Activated T-helper 1 cell treated with anti-CD3 and anti-CD28 coated beads, Interleukin-12 subunit alpha, Interleukin-12 subunit beta, Interleukin-2, Interleukin-4 antibody, amounts not matched to agents 30 ng/mL and 10 ng/mL and 1 ng/mL, durations not matched to agents 14 hours and 24 hours and 36 hours (primary cell): ENCODE measurements at regions of chr15 and their contacts with region 1.

Region 1: DNA sequence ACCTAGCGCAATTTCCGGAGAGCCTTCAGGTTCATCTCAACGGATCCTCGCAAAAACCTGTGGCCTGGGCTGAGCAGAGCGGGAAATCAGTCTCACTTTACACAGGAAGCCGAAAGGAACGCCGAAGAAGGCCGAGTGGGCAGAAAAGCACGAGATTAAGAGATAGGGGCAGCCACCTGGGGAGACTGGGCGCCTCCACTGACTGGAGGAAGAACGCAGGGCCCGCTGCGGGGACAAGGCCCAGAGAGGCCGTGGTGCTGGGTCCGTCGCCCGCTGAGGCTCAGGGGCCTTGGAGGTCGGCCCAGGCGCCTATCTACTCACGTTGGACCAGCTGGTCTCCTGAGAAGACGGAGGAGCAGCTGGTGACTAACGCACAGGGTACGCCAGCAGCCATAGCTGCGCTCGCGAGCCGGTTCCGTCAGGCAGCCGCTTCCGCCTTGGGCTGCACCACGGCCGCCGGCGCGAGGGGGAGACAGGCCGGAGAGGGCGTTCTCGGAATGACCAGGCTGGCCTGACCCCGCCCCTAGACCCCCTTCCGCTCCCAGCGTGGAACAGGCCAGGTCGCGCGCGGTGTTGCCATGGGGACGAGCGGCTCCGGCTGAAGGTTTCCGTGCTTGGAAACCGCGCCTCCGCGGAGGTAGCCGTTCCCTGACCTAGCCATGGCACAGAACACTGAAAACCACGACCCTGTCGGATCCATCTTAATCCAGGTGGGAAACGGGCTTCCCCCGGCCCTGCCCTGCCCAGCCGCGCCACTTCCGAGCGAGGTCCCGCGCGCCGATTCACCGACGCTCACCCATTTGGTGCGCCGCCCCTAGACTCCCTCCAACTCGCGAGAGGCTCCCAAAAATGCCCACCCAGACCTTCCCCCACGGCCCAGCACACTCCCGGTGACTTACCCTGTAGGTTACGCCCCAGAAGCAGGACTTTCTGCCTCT is at the starts of genes AAGAB and IQCH:
- DNase-seq: peak; percentile 98
- H3K4me3 Mint-ChIP-seq: peak within 1 kb of the TSS; percentile 100
- H3K27ac Mint-ChIP-seq: peak within 1 kb of the TSS; percentile 98
- H3K4me1 Mint-ChIP-seq: peaks cover 36% of the 10 kb centered on the region
- H3K27me3 Mint-ChIP-seq: peaks cover 18% of the 10 kb centered on the region
- total RNA-seq, gene AAGAB: 41.7 and 44.0 TPM in 2 replicates
- total RNA-seq, gene IQCH: 0.88 and 1.2 TPM in 2 replicates

Region 2: GRCh38 chr15:67065444-67066093 is 188.9 kb before region 1 on chr15 and contains the start of gene SMAD3:
- intact Hi-C with region 1: loop called (anchors 1 kb)
- DNase-seq: peak; percentile 81
- H3K4me3 Mint-ChIP-seq: peak within 1 kb of the TSS; percentile 100
- H3K27ac Mint-ChIP-seq: peak within 1 kb of the TSS; percentile 95
- H3K4me1 Mint-ChIP-seq: peaks cover 65% of the 10 kb centered on the region
- H3K27me3 Mint-ChIP-seq: peaks cover 3% of the 10 kb centered on the region
- total RNA-seq, gene SMAD3: 80.2 and 80.4 TPM in 2 replicates

Region 3: GRCh38 chr15:67216896-67217295 is 37.6 kb before region 1 on chr15:
- intact Hi-C with region 1: no loop called
- DNase-seq: no peak
- H3K4me3 Mint-ChIP-seq: no peak overlapping the region
- H3K27ac Mint-ChIP-seq: peak overlapping the region; percentile 3
- H3K4me1 Mint-ChIP-seq: peaks cover 11% of the 10 kb centered on the region
- H3K27me3 Mint-ChIP-seq: no peaks in the 10 kb centered on the region